ENCODE measurements at regions of chr10 and their contacts with region 1.

Region 1: GRCh38 chr10:102648889-102649796 is 4.9 kb downstream of the TRIM8 start:
- DNase-seq: peak in 9 of 10 donors; percentile 51 to 85 (median 74)
- H3K4me3 ChIP-seq: peak overlapping the region; percentile 28 to 96 (median 87)
- H3K27ac ChIP-seq: peak overlapping the region; percentile 11 to 100 (median 99)
- H3K27me3 ChIP-seq: no peaks in the 10 kb centered on the region
- CTCF ChIP-seq: peak in 3 of 56 donors; percentile 13 to 38 (median 31)

Region 2: GRCh38 chr10:102678842-102679289 is 29.7 kb after region 1 on chr10:
- intact Hi-C with region 1: loop called in 1 of 2 experiments (anchors 2 kb)
- DNase-seq: peak in 9 of 10 donors; percentile 68 to 85 (median 73)
- H3K4me3 ChIP-seq: peak overlapping the region in 40 of 59 donors; percentile 2 to 54 (median 34)
- H3K27ac ChIP-seq: peak overlapping the region; percentile 54 to 96 (median 86)
- H3K27me3 ChIP-seq: no peaks in the 10 kb centered on the region
- CTCF ChIP-seq: peak; percentile 29 to 85 (median 71)